ENCODE measurements at regions of chr19 and their contacts with region 1.

Region 1: DNA sequence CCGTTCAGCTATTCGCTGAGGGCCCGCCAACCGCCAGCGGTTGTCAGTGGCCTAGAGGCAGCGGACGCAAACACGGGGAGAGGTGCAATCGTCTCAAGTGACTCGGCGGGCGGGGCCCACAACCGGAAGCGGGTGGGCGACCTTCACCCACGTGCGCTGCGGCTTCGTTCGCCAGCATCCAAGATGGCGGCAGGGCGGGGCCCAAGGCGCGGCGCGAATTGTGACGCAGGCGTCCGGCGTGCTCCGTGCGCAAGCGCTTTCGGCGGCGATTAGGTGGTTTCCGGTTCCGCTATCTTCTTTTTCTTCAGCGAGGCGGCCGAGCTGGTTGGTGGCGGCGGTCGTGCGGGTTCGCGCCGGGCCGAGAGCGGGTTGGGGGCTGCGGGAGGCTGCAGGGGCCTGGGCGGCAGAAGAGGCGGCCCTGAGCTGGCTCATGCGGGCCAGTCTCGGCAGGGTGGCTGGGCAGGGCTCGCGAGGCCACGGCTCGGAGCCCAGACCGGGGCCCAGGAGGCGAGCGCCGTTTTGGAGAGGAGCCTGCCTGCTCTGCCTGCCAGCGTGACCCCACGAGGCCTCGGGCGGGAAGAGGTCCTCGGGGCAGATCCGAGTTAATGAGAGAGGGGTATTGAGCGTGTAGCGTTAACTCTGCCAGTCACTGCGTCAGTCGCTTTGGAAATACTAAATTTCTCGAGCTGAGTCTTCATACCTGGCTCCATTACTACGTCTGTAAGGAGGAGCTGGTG is at the start of gene UBA52:
- DNase-seq: peak; percentile 98 to 99 (median 99)
- H3K4me3 ChIP-seq: peak within 1 kb of the TSS; percentile 77
- H3K4me3 Mint-ChIP-seq: peak within 1 kb of the TSS; percentile 90 to 97 (median 93)
- H3K27ac ChIP-seq: peak within 1 kb of the TSS; percentile 96
- H3K27ac Mint-ChIP-seq: peak within 1 kb of the TSS; percentile 92 to 98 (median 94)
- H3K4me1 ChIP-seq: peaks cover 22% of the 10 kb centered on the region
- H3K4me1 Mint-ChIP-seq: peaks cover 19 to 33% (median 22%) of the 10 kb centered on the region in 3 donors
- H3K27me3 ChIP-seq: no peaks in the 10 kb centered on the region
- H3K27me3 Mint-ChIP-seq: no peaks in the 10 kb centered on the region
- total RNA-seq, gene UBA52: 1,684 to 1,700 TPM

Region 2: DNA sequence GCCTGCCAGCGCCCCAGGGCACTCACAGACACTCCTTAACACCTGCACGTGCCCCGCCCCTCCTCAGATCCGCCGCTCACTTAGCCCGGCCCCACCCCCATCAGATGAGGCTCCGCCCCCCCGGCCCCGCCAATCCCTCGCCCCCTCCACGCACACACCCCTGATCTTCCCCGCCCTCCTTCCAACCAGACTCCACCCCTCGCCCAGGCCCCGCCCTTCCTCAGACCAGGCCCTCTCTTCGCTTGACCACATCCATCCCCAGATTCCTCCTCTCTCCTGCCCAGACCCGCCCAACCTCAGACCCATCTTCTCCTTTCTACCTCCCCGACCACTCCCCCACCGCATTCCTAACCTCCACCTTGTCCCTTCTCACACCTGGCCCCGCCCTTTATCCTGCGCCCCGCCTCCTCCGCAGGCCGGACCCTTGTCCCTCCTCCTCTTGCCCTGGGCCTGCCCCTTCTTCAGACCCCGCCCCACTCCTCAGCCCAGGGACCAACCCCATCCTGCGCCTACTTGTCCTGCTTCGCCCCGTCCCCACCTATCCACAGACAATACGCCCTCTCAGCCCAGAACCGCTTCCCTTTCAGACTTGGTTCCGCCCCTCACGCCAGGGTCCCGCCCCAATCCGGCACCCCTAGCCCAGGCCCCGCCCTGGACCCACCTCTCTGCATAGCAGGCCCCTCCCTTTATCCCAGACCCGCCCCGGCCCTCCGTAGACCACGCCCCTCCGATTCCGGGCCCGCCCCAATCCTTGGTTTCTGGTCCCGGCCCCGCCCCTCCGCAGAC is 64.6 kb after region 1 on chr19:
- CTCF ChIA-PET with region 1: no interaction called
- POLR2A ChIA-PET with region 1: interaction called, 12 read pairs
- DNase-seq: peak; percentile 96 to 99 (median 99)
- H3K4me3 ChIP-seq: peak overlapping the region; percentile 85
- H3K4me3 Mint-ChIP-seq: peak overlapping the region; percentile 85 to 94 (median 89)
- H3K27ac ChIP-seq: peak overlapping the region; percentile 54
- H3K27ac Mint-ChIP-seq: peak overlapping the region; percentile 73 to 96 (median 88)
- H3K4me1 ChIP-seq: peaks cover 19% of the 10 kb centered on the region
- H3K4me1 Mint-ChIP-seq: peaks cover 25 to 38% (median 37%) of the 10 kb centered on the region in 3 donors
- H3K27me3 ChIP-seq: no peaks in the 10 kb centered on the region
- H3K27me3 Mint-ChIP-seq: peaks cover 5% of the 10 kb centered on the region in 2 donors